Cardiac septum (tissue), 1 donor: ENCODE measurements at regions of chr2 and their contacts with region 1.

Region 1: GRCh38 chr2:32946314-32947075 is at the start of gene LTBP1:
- DNase-seq: peak; percentile 94
- total RNA-seq, gene LTBP1: 124 TPM

Region 2: DNA sequence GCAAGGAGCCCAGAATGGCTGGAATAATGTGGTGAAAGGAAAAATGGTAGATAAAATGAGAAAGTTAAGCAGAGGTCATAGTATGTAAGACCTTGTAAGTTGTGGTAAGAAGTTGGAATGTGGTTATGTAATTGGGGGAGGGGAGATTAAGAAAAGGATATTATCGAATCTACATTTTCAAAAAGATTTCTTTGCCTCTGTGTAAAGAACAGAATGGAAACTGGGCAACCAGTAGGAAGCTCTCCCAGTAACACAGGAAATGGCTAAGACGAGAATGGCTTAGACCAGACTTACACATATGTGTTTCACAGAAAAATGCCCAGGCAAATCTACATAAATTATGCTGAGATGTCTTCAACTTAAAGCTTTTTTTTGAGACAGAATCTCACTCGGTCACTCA is 948.8 kb before region 1 on chr2:
- intact Hi-C with region 1: no loop called
- DNase-seq: no peak

Region 3: DNA sequence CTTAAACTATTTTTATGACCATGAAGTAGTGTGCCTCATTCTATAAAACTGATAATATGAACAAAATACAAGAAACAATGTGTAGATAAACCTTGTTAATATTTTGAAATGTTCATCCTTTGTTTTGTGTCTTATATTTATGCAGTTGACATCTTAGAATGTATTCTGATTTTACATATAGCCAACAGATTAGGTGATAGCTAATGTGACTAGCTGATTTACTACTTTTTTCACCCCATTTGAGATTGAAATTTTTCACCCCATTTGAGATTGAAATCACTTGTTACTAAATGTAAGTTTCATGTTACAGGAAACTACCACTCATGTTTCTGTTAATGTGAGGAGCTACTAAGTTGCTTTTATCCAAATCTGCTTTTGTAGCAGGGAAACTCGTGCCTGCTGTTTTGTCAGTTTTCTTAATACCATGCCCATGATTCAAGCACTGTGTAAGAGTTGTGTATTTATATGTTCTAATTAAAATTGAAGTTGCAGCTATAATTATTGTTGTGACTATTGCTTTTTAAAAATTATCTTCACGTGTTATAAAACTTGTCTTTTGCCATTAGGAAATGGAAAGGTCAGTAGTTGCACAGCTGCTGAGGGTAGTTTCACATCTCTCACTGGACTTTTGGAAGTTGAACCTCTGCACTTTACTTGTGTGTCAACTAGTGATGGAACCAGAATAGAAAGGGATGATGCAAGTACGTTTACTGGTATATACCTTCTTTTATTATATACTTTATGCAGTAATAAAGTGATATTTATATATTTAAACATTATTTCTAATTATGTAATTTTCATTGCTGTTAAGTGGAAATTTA is 493.0 kb before region 1 on chr2:
- intact Hi-C with region 1: no loop called
- DNase-seq: no peak

Region 4: GRCh38 chr2:32825291-32825712 is 121.2 kb before region 1 on chr2:
- intact Hi-C with region 1: loop called (anchors 2 kb)
- DNase-seq: no peak

Region 5: DNA sequence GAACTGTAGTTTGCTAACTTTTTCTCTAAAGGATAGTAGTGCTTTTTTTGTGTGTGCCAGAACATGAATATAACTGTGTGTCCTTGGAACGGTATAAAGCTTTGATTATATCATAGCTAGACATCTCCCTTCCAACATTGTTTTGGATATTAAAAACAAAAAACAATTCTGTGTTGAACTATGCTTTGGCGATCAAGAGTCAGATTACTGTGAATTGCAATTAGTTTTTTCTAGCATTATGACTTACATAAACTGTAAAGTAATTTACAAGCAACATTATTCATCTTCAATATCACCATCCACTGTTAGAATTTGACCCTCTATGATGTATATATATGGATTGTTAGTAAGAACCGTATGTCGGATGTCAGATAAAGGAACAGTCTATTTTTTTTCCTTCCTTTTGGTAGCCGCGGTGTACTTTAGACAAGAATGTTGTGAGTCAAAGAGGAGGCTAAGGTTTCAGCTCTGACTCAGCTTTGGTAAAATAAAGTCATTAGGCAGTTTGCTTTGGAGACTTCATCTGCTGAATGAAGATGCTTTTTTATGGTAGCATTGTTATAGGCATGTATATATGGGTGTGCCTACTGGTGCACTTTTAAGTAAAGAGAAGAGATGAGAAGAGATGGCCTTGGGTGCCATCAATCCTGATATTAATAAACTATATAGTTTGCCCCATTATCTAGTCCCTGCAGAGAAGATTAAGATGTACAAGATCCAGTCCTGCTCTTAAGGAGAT is 76.7 kb after region 1 on chr2:
- intact Hi-C with region 1: loop called (anchors 2 kb)
- DNase-seq: no peak

Region 6: GRCh38 chr2:33086400-33087015 is 140.0 kb after region 1 on chr2:
- intact Hi-C with region 1: loop called (anchors 5 kb)
- DNase-seq: no peak

Region 7: GRCh38 chr2:33180915-33181314 is 234.4 kb after region 1 on chr2:
- intact Hi-C with region 1: no loop called
- DNase-seq: no peak

Region 8: GRCh38 chr2:33441235-33441810 is 494.8 kb after region 1 on chr2:
- intact Hi-C with region 1: loop called (anchors 2 kb)
- DNase-seq: no peak